Naive thymus-derived CD8-positive, alpha-beta T cell (primary cell): ENCODE measurements at regions of chr10 and their contacts with region 1.

Region 1: GRCh38 chr10:70404036-70404786 is at the start of gene EIF4EBP2:
- DNase-seq: peak; percentile 95 to 99 (median 98)
- ATAC-seq: peak; percentile 62 to 91
- H3K4me3 Mint-ChIP-seq: peak within 1 kb of the TSS; percentile 92 to 98 (median 96)
- H3K27ac Mint-ChIP-seq: peak within 1 kb of the TSS; percentile 90 to 97 (median 94)
- H3K4me1 Mint-ChIP-seq: peaks cover 31 to 49% (median 46%) of the 10 kb centered on the region in 4 donors
- H3K27me3 Mint-ChIP-seq: no peaks in the 10 kb centered on the region
- polyA plus RNA-seq, gene EIF4EBP2: 44.8 to 62.4 (median 47.7) TPM

Region 2: GRCh38 chr10:70169649-70170364 is 234.4 kb before region 1 on chr10:
- POLR2A ChIA-PET with region 1: interaction called, 17 read pairs
- DNase-seq: peak in 3 of 10 donors; percentile 9 to 19 (median 13)
- ATAC-seq: peak; percentile 26 to 27
- H3K4me3 Mint-ChIP-seq: peak overlapping the region; percentile 87 to 96 (median 92)
- H3K27ac Mint-ChIP-seq: peak overlapping the region; percentile 81 to 99 (median 96)
- H3K4me1 Mint-ChIP-seq: peaks cover 30 to 67% (median 55%) of the 10 kb centered on the region in 4 donors
- H3K27me3 Mint-ChIP-seq: no peaks in the 10 kb centered on the region

Region 3: GRCh38 chr10:70241081-70241480 is 163.1 kb before region 1 on chr10:
- POLR2A ChIA-PET with region 1: no interaction called
- DNase-seq: no peak
- ATAC-seq: no peak
- H3K4me3 Mint-ChIP-seq: no peak overlapping the region
- H3K27ac Mint-ChIP-seq: no peak overlapping the region
- H3K4me1 Mint-ChIP-seq: peaks cover 0 to 2% (median 0%) of the 10 kb centered on the region in 4 donors
- H3K27me3 Mint-ChIP-seq: peaks cover 0 to 4% (median 0%) of the 10 kb centered on the region in 5 donors

Region 4: GRCh38 chr10:70391654-70392053 is 12.6 kb before region 1 on chr10:
- POLR2A ChIA-PET with region 1: no interaction called
- DNase-seq: no peak
- ATAC-seq: no peak
- H3K4me3 Mint-ChIP-seq: no peak overlapping the region
- H3K27ac Mint-ChIP-seq: peak overlapping the region in 1 of 10 donors; percentile 7
- H3K4me1 Mint-ChIP-seq: peaks cover 0 to 3% (median 0%) of the 10 kb centered on the region in 4 donors
- H3K27me3 Mint-ChIP-seq: peaks cover 0 to 12% (median 6%) of the 10 kb centered on the region in 5 donors

Region 5: DNA sequence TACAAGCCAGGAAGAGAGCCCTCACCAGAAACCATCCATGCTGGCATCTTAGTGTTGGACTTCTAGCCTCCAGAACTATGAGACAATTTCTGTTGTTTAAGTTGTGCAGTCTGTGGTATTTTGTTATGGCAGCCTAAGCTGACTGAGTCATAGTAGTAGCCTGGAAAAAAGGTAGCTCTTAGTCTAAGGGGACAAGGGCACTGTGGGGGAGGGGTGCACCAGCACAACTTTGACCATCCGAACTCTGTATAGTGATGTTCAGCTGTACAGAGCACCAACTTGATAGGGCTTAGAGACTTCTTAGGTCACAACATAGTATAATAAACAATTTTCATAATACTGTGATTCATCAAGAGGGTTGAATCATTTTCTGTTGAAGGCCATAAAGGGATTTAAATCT is 14.0 kb after region 1 on chr10:
- POLR2A ChIA-PET with region 1: interaction called, 12 read pairs
- DNase-seq: no peak
- ATAC-seq: no peak
- H3K4me3 Mint-ChIP-seq: no peak overlapping the region
- H3K27ac Mint-ChIP-seq: peak overlapping the region in 6 of 10 donors; percentile 6 to 60 (median 50)
- H3K4me1 Mint-ChIP-seq: peaks cover 14 to 35% (median 33%) of the 10 kb centered on the region in 4 donors
- H3K27me3 Mint-ChIP-seq: no peaks in the 10 kb centered on the region